Activated CD4-positive, alpha-beta T cell treated with anti-CD3 and anti-CD28 coated beads for 36 hours (primary cell): ENCODE measurements at regions of chr4 and their contacts with region 1.

Region 1: GRCh38 chr4:102299354-102300107 is 45.8 kb downstream of the SLC39A8 start:
- DNase-seq: peak; percentile 42
- ATAC-seq: peak; percentile 88
- H3K4me3 Mint-ChIP-seq: no peak overlapping the region
- H3K27ac Mint-ChIP-seq: no peak overlapping the region
- H3K4me1 Mint-ChIP-seq: peaks cover 1% of the 10 kb centered on the region
- H3K27me3 Mint-ChIP-seq: no peaks in the 10 kb centered on the region

Region 2: DNA sequence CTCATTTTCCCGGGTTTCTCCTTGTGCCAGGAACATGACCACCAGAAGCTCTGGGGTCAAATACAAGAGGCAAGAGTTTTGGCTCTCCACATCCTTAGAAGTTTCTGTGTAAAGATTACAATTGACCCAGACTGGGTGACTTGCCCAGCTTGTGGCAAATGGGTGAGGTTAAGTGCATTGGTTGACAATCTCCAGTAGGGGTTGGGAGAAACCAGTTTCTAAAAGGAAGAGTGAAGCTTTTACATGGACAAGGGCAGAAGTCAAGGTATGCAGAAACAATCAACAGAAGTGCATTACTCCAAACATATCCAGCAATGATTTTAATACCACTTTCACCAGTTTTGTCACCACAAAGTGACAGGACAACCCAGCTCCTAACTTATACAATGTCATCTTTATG is 44.1 kb before region 1 on chr4:
- CTCF ChIA-PET with region 1: interaction called, 3 read pairs
- POLR2A ChIA-PET with region 1: no interaction called
- intact Hi-C with region 1: loop called in 1 of 2 experiments (anchors 2 kb)
- DNase-seq: no peak
- ATAC-seq: no peak
- H3K4me3 Mint-ChIP-seq: no peak overlapping the region
- H3K27ac Mint-ChIP-seq: no peak overlapping the region
- H3K4me1 Mint-ChIP-seq: no peaks in the 10 kb centered on the region
- H3K27me3 Mint-ChIP-seq: no peaks in the 10 kb centered on the region